Activated B cell treated with CpG ODN at 0.5 μM for 24 hours (primary cell): ENCODE measurements at regions of chr5 and their contacts with region 1.

Region 1: GRCh38 chr5:179623003-179623880 is at the start of gene HNRNPH1:
- DNase-seq: peak; percentile 93
- ATAC-seq: peak; percentile 80
- H3K4me3 Mint-ChIP-seq: peak within 1 kb of the TSS; percentile 98
- H3K27ac Mint-ChIP-seq: peak within 1 kb of the TSS; percentile 99
- H3K4me1 Mint-ChIP-seq: peaks cover 50% of the 10 kb centered on the region
- H3K27me3 Mint-ChIP-seq: no peaks in the 10 kb centered on the region
- CTCF ChIP-seq: no peak
- total RNA-seq, gene HNRNPH1: 1,061 and 1,210 TPM in 2 replicates

Region 2: DNA sequence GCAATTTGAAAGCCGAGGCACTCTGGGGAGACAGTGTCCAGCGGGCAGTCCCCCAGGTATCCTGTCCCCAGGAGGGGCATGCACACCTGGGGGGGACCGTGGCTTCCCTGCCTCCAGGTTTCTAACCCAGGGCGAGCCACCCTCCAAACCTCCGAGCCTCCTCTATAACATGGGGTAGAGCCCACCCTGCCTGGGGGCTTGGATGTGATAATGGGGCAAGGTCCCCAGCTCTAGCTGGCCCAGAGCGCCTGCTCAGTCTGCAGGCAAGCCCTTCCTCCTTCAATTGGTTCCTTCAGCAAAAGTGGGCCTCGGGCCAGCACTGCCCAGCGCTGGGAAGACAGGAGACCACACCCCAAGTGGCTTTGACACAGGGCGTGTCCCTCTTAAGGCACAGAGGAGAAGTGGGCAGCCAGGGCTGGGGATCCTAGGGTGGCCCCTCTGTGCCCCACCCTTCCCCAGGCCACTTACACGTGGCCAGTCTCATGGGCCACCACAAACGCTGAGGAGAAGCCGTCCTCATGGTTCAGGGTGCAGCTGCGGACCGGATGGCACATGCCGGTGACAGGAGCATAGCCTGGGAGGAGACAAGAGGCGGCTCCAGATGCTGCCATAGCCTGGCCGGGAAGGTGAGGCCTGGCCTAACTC is 468.8 kb before region 1 on chr5:
- CTCF ChIA-PET with region 1: no interaction called
- POLR2A ChIA-PET with region 1: no interaction called
- intact Hi-C with region 1: no loop called
- DNase-seq: no peak
- ATAC-seq: no peak
- H3K4me3 Mint-ChIP-seq: no peak overlapping the region
- H3K27ac Mint-ChIP-seq: no peak overlapping the region
- H3K4me1 Mint-ChIP-seq: no peaks in the 10 kb centered on the region
- H3K27me3 Mint-ChIP-seq: no peaks in the 10 kb centered on the region
- CTCF ChIP-seq: no peak

Region 3: GRCh38 chr5:179275941-179276837 is 347.1 kb before region 1 on chr5:
- CTCF ChIA-PET with region 1: no interaction called
- POLR2A ChIA-PET with region 1: no interaction called
- intact Hi-C with region 1: no loop called
- DNase-seq: no peak
- ATAC-seq: no peak
- H3K4me3 Mint-ChIP-seq: no peak overlapping the region
- H3K27ac Mint-ChIP-seq: no peak overlapping the region
- H3K4me1 Mint-ChIP-seq: no peaks in the 10 kb centered on the region
- H3K27me3 Mint-ChIP-seq: no peaks in the 10 kb centered on the region
- CTCF ChIP-seq: no peak

Region 4: GRCh38 chr5:179475208-179475751 is 148.0 kb before region 1 on chr5:
- CTCF ChIA-PET with region 1: no interaction called
- POLR2A ChIA-PET with region 1: no interaction called
- intact Hi-C with region 1: no loop called
- DNase-seq: no peak
- ATAC-seq: no peak
- H3K4me3 Mint-ChIP-seq: no peak overlapping the region
- H3K27ac Mint-ChIP-seq: no peak overlapping the region
- H3K4me1 Mint-ChIP-seq: no peaks in the 10 kb centered on the region
- H3K27me3 Mint-ChIP-seq: peaks cover 6% of the 10 kb centered on the region
- CTCF ChIP-seq: no peak

Region 5: GRCh38 chr5:179530069-179530998 is 92.9 kb before region 1 on chr5:
- CTCF ChIA-PET with region 1: no interaction called
- POLR2A ChIA-PET with region 1: interaction called, 14 read pairs
- intact Hi-C with region 1: no loop called
- DNase-seq: peak; percentile 68
- ATAC-seq: peak; percentile 80
- H3K4me3 Mint-ChIP-seq: peak overlapping the region; percentile 78
- H3K27ac Mint-ChIP-seq: no peak overlapping the region
- H3K4me1 Mint-ChIP-seq: peaks cover 33% of the 10 kb centered on the region
- H3K27me3 Mint-ChIP-seq: no peaks in the 10 kb centered on the region
- CTCF ChIP-seq: no peak

Region 6: GRCh38 chr5:179585941-179586655 is 37.1 kb before region 1 on chr5:
- CTCF ChIA-PET with region 1: no interaction called
- POLR2A ChIA-PET with region 1: interaction called, 11 read pairs
- intact Hi-C with region 1: no loop called
- DNase-seq: no peak
- ATAC-seq: no peak
- H3K4me3 Mint-ChIP-seq: no peak overlapping the region
- H3K27ac Mint-ChIP-seq: no peak overlapping the region
- H3K4me1 Mint-ChIP-seq: no peaks in the 10 kb centered on the region
- H3K27me3 Mint-ChIP-seq: no peaks in the 10 kb centered on the region
- CTCF ChIP-seq: no peak

Region 7: GRCh38 chr5:179697993-179698934 is 75.0 kb after region 1 on chr5:
- CTCF ChIA-PET with region 1: no interaction called
- POLR2A ChIA-PET with region 1: interaction called, 32 read pairs
- intact Hi-C with region 1: loop called (anchors 1 kb)
- DNase-seq: peak; percentile 96
- ATAC-seq: peak; percentile 89
- H3K4me3 Mint-ChIP-seq: peak overlapping the region; percentile 97
- H3K27ac Mint-ChIP-seq: peak overlapping the region; percentile 99
- H3K4me1 Mint-ChIP-seq: peaks cover 41% of the 10 kb centered on the region
- H3K27me3 Mint-ChIP-seq: no peaks in the 10 kb centered on the region
- CTCF ChIP-seq: no peak

Region 8: DNA sequence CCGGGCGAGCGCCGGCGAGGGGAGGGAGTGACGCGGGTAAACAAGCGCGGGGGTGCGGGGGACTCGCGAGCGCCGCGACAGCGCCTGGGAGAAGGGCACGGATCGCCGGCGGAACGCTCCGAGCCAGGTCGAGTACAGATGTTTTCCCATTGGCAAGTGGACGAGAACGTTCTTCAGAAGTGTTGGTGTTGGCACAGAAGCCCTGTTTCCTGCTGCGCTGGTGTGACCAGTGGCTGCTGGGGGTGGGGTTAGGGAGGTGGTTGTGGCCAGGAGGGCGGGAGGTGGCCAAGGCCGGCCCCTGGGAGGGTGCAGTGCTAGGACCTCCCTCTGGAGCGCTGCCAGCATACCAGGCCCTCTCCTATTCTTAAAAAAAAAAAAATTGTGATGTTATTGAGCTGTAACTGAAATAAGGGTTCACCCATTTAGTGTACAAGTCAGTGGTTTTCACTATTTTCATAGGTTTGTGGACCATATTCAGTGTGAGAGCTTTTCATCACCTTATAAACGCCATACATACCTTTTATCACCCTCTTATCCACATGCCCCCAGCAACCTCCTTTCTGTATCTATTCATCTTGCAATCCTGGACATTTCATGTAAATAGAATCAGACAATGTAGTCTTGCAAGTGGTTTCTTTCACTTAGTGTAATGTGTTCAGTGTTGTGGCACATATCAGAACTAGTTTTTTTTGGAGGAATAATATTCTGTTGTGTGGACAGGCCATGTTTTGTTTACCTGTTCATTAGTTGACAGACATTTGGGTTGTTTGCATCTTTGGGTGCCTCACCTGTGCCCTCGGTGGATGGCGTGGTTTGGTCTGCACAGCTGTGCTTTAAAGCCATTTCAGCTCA is 198.6 kb after region 1 on chr5:
- CTCF ChIA-PET with region 1: no interaction called
- POLR2A ChIA-PET with region 1: interaction called, 13 read pairs
- intact Hi-C with region 1: loop called (anchors 2 kb)
- DNase-seq: peak; percentile 75
- ATAC-seq: peak; percentile 52
- H3K4me3 Mint-ChIP-seq: peak overlapping the region; percentile 96
- H3K27ac Mint-ChIP-seq: peak overlapping the region; percentile 92
- H3K4me1 Mint-ChIP-seq: peaks cover 62% of the 10 kb centered on the region
- H3K27me3 Mint-ChIP-seq: no peaks in the 10 kb centered on the region
- CTCF ChIP-seq: no peak

Region 9: DNA sequence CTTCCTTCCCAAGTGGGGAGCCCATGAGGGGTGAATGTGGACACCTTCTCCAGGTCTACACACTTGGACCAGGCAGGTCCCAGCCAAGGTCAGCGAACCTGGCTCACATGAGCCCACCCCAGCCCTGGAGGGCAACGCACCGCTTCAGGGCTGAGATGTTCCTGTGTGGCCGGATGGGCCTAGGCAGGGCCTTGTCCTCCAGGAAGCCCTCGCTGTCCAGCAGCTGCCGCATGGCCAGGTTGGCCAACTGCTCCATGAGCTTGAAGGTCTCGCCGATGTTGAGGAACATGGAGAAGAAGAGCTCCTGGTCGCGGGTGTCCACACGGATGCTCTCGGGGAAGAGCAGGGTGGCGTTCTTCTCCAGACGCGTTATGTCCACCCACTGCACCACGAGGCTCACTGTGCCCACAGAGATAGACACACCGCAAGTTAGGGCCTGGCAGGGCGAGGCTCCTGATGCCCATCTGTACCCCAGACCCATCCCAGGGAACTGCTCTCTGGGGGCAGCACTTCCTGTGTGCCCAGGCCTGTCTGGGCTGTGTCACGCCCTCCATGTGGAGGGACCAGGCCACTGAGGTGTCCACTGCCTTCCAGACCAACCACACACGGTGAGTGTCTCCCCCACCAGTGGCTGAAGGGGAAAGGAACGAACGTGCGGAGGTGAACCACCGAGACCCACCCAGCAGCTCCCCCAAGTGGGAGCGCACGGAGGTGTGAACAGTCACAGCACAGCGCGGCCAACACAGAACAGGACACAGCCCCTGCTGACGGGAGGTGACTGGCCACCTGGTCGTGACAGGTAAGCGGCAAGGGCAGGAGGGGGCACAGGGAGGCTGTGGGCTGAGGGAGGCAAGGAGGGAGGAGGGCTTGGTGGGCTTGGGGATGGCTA is 270.1 kb after region 1 on chr5:
- CTCF ChIA-PET with region 1: no interaction called
- POLR2A ChIA-PET with region 1: no interaction called
- intact Hi-C with region 1: no loop called
- DNase-seq: no peak
- ATAC-seq: no peak
- H3K4me3 Mint-ChIP-seq: no peak overlapping the region
- H3K27ac Mint-ChIP-seq: no peak overlapping the region
- H3K4me1 Mint-ChIP-seq: no peaks in the 10 kb centered on the region
- H3K27me3 Mint-ChIP-seq: no peaks in the 10 kb centered on the region
- CTCF ChIP-seq: no peak